GM10248 (cell line): ENCODE measurements at regions of chr3 and their contacts with region 1.

Region 1: GRCh38 chr3:168113848-168114247 is 18.1 kb upstream of the GOLIM4 start:
- DNase-seq: no peak
- CTCF ChIP-seq: no peak

Region 2: GRCh38 chr3:167941234-167941995 is 172.4 kb before region 1 on chr3:
- CTCF ChIA-PET with region 1: no interaction called
- POLR2A ChIA-PET with region 1: no interaction called
- DNase-seq: no peak
- CTCF ChIP-seq: no peak

Region 3: GRCh38 chr3:168100777-168101492 is 12.9 kb before region 1 on chr3:
- CTCF ChIA-PET with region 1: interaction called, 27 read pairs
- POLR2A ChIA-PET with region 1: no interaction called
- DNase-seq: no peak
- CTCF ChIP-seq: no peak